Dendritic cell treated with granulocyte-macrophage colony-stimulating factor and Interleukin-4, amounts not matched to agents 40 ng/mL and 50 ng/mL, for 4 days (primary cell): ENCODE measurements at regions of chr4 and their contacts with region 1.

Region 1: GRCh38 chr4:99816545-99817308 is at the start of gene DAPP1:
- H3K4me3 Mint-ChIP-seq: peak within 1 kb of the TSS; percentile 95
- H3K27ac Mint-ChIP-seq: peak within 1 kb of the TSS; percentile 94
- H3K4me1 Mint-ChIP-seq: peaks cover 64% of the 10 kb centered on the region
- H3K27me3 Mint-ChIP-seq: no peaks in the 10 kb centered on the region

Region 2: GRCh38 chr4:99088481-99089365 is 728.0 kb before region 1 on chr4 and contains the start of gene ADH5:
- intact Hi-C with region 1: loop called (anchors 10 kb)
- H3K4me3 Mint-ChIP-seq: peak within 1 kb of the TSS; percentile 89
- H3K27ac Mint-ChIP-seq: peak within 1 kb of the TSS; percentile 93
- H3K4me1 Mint-ChIP-seq: peaks cover 47% of the 10 kb centered on the region
- H3K27me3 Mint-ChIP-seq: peaks cover 2% of the 10 kb centered on the region

Region 3: GRCh38 chr4:99855678-99856077 is 39.0 kb after region 1 on chr4:
- intact Hi-C with region 1: loop called (anchors 2 kb)
- H3K4me3 Mint-ChIP-seq: no peak overlapping the region
- H3K27ac Mint-ChIP-seq: peak overlapping the region; percentile 81
- H3K4me1 Mint-ChIP-seq: peaks cover 63% of the 10 kb centered on the region
- H3K27me3 Mint-ChIP-seq: no peaks in the 10 kb centered on the region

Region 4: GRCh38 chr4:99949034-99949998 is 132.6 kb after region 1 on chr4:
- intact Hi-C with region 1: loop called (anchors 2 kb)
- H3K4me3 Mint-ChIP-seq: no peak overlapping the region
- H3K27ac Mint-ChIP-seq: no peak overlapping the region
- H3K4me1 Mint-ChIP-seq: peaks cover 30% of the 10 kb centered on the region
- H3K27me3 Mint-ChIP-seq: no peaks in the 10 kb centered on the region

Region 5: DNA sequence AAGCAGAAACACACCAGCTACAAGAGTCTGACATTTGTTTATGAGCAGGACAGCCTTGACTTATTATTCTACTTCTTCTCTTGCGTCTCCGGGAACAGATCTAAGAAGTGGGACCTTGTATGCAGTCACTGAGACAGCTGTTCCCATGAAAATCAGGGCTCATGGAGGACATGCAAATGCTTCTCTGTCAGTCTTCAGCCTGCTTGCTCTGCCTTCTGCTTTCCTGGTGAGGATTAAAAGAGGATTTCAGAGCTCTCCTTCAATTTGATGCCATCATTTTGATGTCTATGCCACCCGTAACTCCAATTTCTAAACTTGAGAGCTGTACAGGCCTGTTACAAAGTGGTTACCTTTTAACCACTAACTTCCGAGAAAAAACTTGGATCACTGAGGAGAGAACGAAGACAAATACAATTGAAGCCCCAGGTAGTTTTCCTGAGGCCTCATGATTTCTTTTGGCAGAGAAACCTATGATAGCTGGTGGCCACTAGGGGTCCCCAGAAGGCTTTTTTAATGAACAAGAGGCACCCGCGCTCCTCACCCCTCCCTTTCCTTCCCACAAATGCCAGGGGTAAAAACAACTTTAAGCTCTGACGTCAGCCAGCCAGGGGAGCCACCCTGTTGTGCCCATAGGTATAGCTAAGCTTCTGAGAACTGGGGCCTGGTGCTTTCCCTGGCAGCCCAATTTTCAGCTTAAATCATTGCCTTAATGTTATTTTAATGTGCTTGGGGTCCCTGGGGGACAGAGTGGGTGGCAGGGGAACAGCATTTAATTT is 276.6 kb after region 1 on chr4:
- intact Hi-C with region 1: loop called (anchors 10 kb)
- H3K4me3 Mint-ChIP-seq: no peak overlapping the region
- H3K27ac Mint-ChIP-seq: no peak overlapping the region
- H3K4me1 Mint-ChIP-seq: peaks cover 6% of the 10 kb centered on the region
- H3K27me3 Mint-ChIP-seq: peaks cover 1% of the 10 kb centered on the region